Activated CD8-positive, alpha-beta T cell treated with anti-CD3 and anti-CD28 coated beads, Interleukin-2, amount 10 ng/mL, durations not matched to agents 7 days and 5 days (primary cell): ENCODE measurements at regions of chr20 and their contacts with region 1.

Region 1: GRCh38 chr20:49936153-49937027 is at the start of gene RNF114:
- DNase-seq: peak; percentile 93
- ATAC-seq: peak; percentile 90
- H3K4me3 Mint-ChIP-seq: peak within 1 kb of the TSS; percentile 96
- H3K27ac Mint-ChIP-seq: peak within 1 kb of the TSS; percentile 94
- H3K4me1 Mint-ChIP-seq: peaks cover 43% of the 10 kb centered on the region
- H3K27me3 Mint-ChIP-seq: no peaks in the 10 kb centered on the region
- total RNA-seq, gene RNF114: 50.1 to 54.8 TPM

Region 2: GRCh38 chr20:49901588-49901987 is 34.8 kb before region 1 on chr20:
- CTCF ChIA-PET with region 1: no interaction called
- POLR2A ChIA-PET with region 1: no interaction called
- DNase-seq: no peak
- ATAC-seq: no peak
- H3K4me3 Mint-ChIP-seq: no peak overlapping the region
- H3K27ac Mint-ChIP-seq: no peak overlapping the region
- H3K4me1 Mint-ChIP-seq: no peaks in the 10 kb centered on the region
- H3K27me3 Mint-ChIP-seq: no peaks in the 10 kb centered on the region

Region 3: DNA sequence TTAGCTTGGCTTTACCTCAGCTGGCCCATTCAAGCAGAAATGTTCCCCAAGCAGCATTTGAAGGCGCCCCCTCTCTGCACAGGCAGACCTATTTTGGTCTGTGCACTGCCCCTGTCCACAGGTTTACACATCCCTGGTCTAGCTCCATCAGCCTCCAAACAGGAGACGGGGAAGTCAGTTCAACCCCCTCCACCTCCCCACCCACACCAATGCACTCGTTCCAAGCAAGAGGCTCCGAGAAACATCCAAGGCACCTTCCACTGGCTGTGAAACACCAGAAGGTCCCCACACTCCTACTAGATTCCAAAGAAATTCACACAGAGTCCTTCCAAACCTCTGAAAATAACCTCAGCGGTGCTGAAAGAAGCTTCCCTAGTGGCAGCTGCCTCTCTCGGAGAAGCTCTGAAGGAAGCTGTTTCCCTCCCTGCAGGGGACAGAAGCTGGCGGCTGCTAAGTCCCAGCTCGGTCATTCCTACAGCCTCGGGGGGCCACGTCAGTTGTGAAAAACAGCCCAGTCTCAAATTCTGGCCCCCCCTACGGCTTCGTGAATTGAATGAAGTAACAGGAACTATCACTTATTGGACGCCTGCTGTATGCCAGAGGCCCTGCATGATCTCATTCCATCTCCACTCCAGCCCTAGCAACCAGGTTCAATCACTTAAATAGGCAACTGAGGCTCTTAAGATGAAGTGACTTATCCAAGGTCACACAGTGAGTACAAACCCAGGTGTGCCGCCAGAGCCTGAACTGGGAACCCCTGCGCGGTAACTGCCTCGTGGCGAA is 21.9 kb before region 1 on chr20:
- CTCF ChIA-PET with region 1: interaction called, 7 read pairs
- POLR2A ChIA-PET with region 1: interaction called, 17 read pairs
- DNase-seq: peak; percentile 43
- ATAC-seq: peak; percentile 3
- H3K4me3 Mint-ChIP-seq: peak overlapping the region; percentile 99
- H3K27ac Mint-ChIP-seq: peak overlapping the region; percentile 100
- H3K4me1 Mint-ChIP-seq: peaks cover 31% of the 10 kb centered on the region
- H3K27me3 Mint-ChIP-seq: no peaks in the 10 kb centered on the region